H1 (cell line): ENCODE measurements at regions of chr7 and their contacts with region 1.

Region 1: DNA sequence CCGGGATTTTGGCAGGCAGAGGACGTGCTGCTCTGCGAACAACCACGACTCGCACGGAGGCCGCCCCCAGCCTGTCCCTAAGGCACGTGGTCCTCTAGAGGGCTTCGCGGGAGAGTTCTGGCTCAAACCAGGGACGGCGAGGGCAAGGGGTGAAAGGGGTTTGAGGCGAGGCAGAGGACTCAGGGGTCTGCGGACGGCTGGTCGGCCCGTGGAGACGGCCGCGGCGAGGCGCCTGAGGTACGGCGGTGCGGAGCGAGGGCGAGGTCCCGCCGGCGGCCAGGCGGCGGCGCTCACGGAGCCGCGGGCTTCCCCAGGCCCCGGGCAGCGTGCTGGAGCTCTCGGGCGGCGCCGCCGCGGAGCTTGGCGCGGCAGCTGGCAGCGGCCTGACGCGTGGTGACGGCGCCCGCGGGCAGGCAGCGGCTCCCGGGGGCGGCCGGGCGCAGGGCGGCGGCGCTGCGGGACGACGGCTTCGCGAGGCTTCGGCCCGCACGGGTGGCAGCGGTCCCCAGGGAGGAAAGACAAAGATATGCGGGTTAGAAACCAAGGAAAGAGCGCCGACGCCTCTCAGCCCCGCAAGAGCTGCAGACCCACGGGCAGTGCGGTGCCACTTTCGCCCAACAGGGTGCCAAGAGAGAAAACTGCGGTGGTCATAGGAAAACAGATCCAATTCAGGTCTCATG is 44.8 kb downstream of the ZNF800 start:
- DNase-seq: peak; percentile 50 to 84
- H3K4me3 ChIP-seq: peak overlapping the region; percentile 5 to 54 (median 39); a peak in 7 of 8 replicates
- H3K27ac ChIP-seq: no peak overlapping the region
- H3K4me1 ChIP-seq: peaks cover 0 to 2% (median under 1%) of the 10 kb centered on the region in 4 experiments; a peak in 1 of 7 replicates
- H3K27me3 ChIP-seq: peaks cover 7 to 26% (median 16%) of the 10 kb centered on the region in 4 experiments
- CTCF ChIP-seq: peak; percentile 73 to 96 (median 79)
- EP300 ChIP-seq: no peak
- POLR2A ChIP-seq: no peak
- RAD21 ChIP-seq: peak; percentile 31 to 71

Region 2: GRCh38 chr7:127158659-127159058 is 189.0 kb before region 1 on chr7:
- CTCF ChIA-PET with region 1: no interaction called
- POLR2A ChIA-PET with region 1: no interaction called
- DNase-seq: no peak
- H3K4me3 ChIP-seq: no peak overlapping the region
- H3K27ac ChIP-seq: no peak overlapping the region
- H3K4me1 ChIP-seq: no peaks in the 10 kb centered on the region
- H3K27me3 ChIP-seq: peaks cover 0 to 1% (median 0%) of the 10 kb centered on the region in 4 experiments; a peak in 1 of 7 replicates
- CTCF ChIP-seq: peak in 2 of 3 experiments; percentile 46 to 72; a peak in 3 of 4 replicates
- EP300 ChIP-seq: no peak
- POLR2A ChIP-seq: no peak
- RAD21 ChIP-seq: peak; percentile 35 to 49

Region 3: DNA sequence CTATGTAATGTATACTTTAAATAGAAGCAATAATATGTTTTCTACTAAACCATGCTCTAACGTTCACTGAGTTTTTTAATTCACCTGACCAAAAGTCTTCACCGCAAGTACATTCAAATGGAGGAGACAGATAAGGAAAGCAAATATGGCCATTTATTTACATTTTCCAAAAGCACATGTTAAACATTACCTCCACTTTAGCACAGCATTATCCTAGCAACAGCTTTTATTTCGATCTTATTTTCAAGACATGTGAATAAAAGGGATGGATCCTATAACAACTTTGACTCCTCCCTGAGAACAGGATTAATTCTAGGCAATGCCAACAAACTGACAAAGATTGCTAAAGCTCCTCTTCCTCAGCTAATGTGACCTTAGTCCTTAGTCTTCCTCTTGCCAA is 83.5 kb before region 1 on chr7:
- CTCF ChIA-PET with region 1: no interaction called
- POLR2A ChIA-PET with region 1: no interaction called
- DNase-seq: no peak
- H3K4me3 ChIP-seq: no peak overlapping the region
- H3K27ac ChIP-seq: no peak overlapping the region
- H3K4me1 ChIP-seq: no peaks in the 10 kb centered on the region
- H3K27me3 ChIP-seq: no peaks in the 10 kb centered on the region; a peak in 1 of 7 replicates
- CTCF ChIP-seq: no peak
- EP300 ChIP-seq: no peak
- POLR2A ChIP-seq: no peak
- RAD21 ChIP-seq: no peak

Region 4: DNA sequence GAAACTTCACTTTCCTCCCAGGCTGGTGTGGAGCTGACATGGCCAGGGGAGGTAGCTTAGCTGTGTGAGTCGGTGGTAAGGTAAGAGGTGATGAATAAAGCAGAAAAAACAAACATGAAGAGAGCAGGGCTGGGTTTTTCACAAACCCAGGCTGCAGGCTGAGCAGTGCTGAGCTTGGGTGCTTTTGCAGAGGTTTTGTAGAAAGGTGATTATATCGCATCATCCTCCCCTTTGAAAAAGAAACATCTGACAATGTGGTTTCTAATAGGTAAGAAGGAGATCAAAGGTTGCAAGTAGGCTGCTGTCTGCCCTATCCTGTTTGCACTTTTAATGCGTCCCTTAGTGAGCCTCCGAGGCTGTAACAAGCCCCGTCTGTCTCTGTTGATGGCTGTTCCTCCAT is 25.4 kb before region 1 on chr7:
- CTCF ChIA-PET with region 1: interaction called, 15 read pairs
- POLR2A ChIA-PET with region 1: no interaction called
- DNase-seq: no peak
- H3K4me3 ChIP-seq: no peak overlapping the region
- H3K27ac ChIP-seq: no peak overlapping the region
- H3K4me1 ChIP-seq: peaks cover 0 to 3% (median 0%) of the 10 kb centered on the region in 4 experiments; a peak in 1 of 7 replicates
- H3K27me3 ChIP-seq: no peaks in the 10 kb centered on the region
- CTCF ChIP-seq: no peak
- EP300 ChIP-seq: no peak
- POLR2A ChIP-seq: no peak
- RAD21 ChIP-seq: no peak

Region 5: GRCh38 chr7:127375631-127376030 is 27.9 kb after region 1 on chr7:
- CTCF ChIA-PET with region 1: interaction called, 10 read pairs
- POLR2A ChIA-PET with region 1: no interaction called
- DNase-seq: no peak
- H3K4me3 ChIP-seq: no peak overlapping the region
- H3K27ac ChIP-seq: no peak overlapping the region
- H3K4me1 ChIP-seq: no peaks in the 10 kb centered on the region
- H3K27me3 ChIP-seq: no peaks in the 10 kb centered on the region
- CTCF ChIP-seq: no peak
- EP300 ChIP-seq: no peak
- POLR2A ChIP-seq: no peak
- RAD21 ChIP-seq: no peak

Region 6: GRCh38 chr7:127654404-127655394 is 307.0 kb after region 1 on chr7:
- CTCF ChIA-PET with region 1: no interaction called
- POLR2A ChIA-PET with region 1: no interaction called
- DNase-seq: no peak
- H3K4me3 ChIP-seq: peak overlapping the region in 1 of 4 experiments; percentile 88; a peak in 2 of 8 replicates
- H3K27ac ChIP-seq: no peak overlapping the region
- H3K4me1 ChIP-seq: peaks cover 5 to 15% (median 8%) of the 10 kb centered on the region in 4 experiments; a peak in 6 of 7 replicates
- H3K27me3 ChIP-seq: no peaks in the 10 kb centered on the region
- CTCF ChIP-seq: no peak
- EP300 ChIP-seq: no peak
- POLR2A ChIP-seq: no peak
- RAD21 ChIP-seq: no peak